HEK293 (cell line): ENCODE measurements at regions of chr7 and their contacts with region 1.

Region 1: DNA sequence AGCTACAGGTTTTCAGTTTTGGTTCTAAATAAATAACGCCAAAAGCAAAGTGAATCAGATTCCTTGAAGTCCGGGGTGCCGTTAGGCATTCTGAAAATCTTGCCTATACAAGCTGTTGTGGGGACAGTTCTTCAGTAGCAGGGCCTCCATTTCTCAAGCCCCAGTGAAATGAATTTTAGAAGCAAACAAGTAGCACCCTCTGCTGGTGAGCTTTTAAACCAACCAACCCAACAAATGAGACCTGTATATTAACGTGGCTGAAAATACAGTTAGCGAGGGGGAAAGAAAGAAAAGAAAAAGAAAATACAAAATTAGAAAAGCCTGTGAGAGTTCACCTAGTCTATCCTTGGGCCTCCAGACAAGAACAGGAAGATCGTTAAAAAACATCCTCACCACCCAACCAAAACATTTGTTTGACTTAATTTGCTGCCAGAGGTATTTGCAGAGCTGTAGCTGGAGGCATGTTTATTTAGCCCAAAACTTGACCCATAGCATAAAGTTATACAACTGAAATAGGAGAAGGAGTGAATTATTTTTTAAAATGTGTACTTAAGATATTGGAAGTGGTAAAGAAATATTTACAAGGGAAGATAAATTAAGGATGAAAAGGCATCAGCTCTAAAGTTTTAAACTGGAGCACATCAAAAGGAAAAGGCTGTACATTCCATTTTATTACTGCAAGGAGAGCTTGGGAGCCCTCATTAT is 98.9 kb downstream of the DYNC1I1 start:
- H3K4me3 ChIP-seq: no peak overlapping the region
- H3K27ac ChIP-seq: 0 out of 2 replicates have a peak overlapping the region, but pooled peaks have one; percentile 35
- H3K4me1 ChIP-seq: peaks cover 5% of the 10 kb centered on the region; the same call in 1 of the 2 replicates
- CTCF ChIP-seq: peak; percentile 51; the same call in 1 of the 2 replicates

Region 2: DNA sequence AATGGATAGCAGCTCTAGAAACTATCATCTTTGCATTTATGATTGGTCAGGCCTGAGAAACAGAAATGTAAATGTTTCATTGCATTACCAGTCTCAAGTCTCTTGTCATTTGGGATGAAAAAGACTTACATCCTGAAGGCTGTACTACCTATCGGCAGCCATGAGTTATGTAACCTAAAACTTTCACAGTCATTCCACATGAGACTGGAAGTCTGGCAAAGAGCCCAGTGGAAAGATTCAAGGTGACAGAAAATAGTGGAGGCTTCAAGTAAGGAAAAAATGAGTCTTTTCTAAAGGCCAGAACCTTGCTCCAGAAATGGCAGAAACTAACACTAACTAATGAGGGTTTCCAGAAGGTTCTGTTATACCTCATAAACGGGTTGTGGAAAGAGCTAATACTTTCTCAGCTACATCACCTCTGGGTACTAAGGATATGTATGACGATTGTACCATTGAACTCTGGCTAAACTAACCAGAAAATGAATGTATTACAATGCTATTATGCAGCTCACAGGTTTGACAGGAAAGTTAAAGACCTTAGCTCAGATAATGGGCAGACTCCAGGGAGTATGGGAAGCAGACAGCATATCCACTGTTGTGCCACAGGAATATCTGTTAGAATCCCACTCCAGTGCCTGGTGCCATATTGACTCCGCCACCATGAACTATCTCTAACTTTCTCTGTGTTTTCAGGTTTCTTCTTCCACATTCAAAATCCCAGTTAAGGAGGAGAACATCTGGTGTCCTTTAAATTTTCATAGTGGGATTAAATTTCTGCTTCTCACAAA is 140.5 kb before region 1 on chr7:
- CTCF ChIA-PET with region 1: interaction called, 205 read pairs
- POLR2A ChIA-PET with region 1: no interaction called
- H3K4me3 ChIP-seq: no peak overlapping the region
- H3K27ac ChIP-seq: no peak overlapping the region
- H3K4me1 ChIP-seq: no peaks in the 10 kb centered on the region
- CTCF ChIP-seq: no peak

Region 3: GRCh38 chr7:95794917-95795515 is 76.2 kb before region 1 on chr7:
- CTCF ChIA-PET with region 1: interaction called, 17 read pairs
- POLR2A ChIA-PET with region 1: no interaction called
- H3K4me3 ChIP-seq: no peak overlapping the region
- H3K27ac ChIP-seq: no peak overlapping the region
- H3K4me1 ChIP-seq: 0 out of 2 replicates have a peak, but pooled peaks cover 5% of the 10 kb centered on the region
- CTCF ChIP-seq: no peak

Region 4: DNA sequence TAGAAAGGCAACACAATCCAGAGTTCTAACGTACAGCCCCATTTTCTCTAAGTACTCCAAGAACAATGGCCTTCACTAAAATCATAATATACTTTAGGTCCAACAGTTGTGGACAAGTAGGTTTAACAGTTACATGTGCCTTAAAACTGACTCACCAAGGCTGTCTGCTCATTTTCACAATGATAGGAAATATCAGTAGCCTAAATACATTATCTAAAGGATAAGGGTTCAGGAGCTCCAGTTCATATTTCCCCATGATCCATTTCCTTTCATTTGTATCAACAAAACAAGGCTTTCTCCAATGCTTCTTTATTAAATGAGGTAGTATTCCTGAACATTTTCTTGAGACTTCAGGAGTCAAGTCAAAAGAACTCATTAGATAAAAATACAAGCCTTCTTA is 286.6 kb after region 1 on chr7:
- CTCF ChIA-PET with region 1: no interaction called
- POLR2A ChIA-PET with region 1: no interaction called
- H3K4me3 ChIP-seq: no peak overlapping the region
- H3K27ac ChIP-seq: no peak overlapping the region
- H3K4me1 ChIP-seq: no peaks in the 10 kb centered on the region
- CTCF ChIP-seq: no peak

Region 5: DNA sequence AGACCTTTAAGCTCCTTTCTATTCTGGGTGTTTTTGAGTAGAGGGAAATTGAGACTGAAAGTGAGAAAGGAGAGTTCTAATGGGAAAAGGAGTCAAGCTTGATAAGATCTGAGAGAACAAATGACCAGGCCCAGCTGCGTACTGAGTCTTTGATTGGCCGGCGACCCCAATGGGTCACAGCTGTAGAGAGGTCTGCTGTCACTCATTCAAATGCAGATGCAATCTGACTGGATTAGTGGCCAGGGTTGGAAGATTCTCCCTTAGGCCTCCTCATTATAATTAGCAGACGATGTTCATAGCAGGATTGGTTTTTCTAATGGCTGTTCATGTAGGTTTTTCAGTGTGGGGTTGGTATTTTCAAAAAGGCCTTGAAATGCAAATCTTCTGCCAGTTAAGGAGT is 577.9 kb after region 1 on chr7:
- CTCF ChIA-PET with region 1: no interaction called
- POLR2A ChIA-PET with region 1: no interaction called
- H3K4me3 ChIP-seq: no peak overlapping the region
- H3K27ac ChIP-seq: no peak overlapping the region
- H3K4me1 ChIP-seq: no peaks in the 10 kb centered on the region
- CTCF ChIP-seq: no peak